ENCODE measurements at regions of chr6 and their contacts with region 1.

Region 1: GRCh38 chr6:33744001-33744848 is 2.5 kb downstream of the IP6K3 start:
- DNase-seq: peak; percentile 73
- ATAC-seq: peak; percentile 85
- H3K4me3 ChIP-seq: no peak overlapping the region
- H3K27ac ChIP-seq: no peak overlapping the region
- H3K4me1 ChIP-seq: peaks cover 6% of the 10 kb centered on the region
- H3K27me3 ChIP-seq: no peaks in the 10 kb centered on the region
- CTCF ChIP-seq: peak; percentile 96

Region 2: GRCh38 chr6:33453393-33454008 is 290.7 kb before region 1 on chr6:
- CTCF ChIA-PET with region 1: no interaction called
- POLR2A ChIA-PET with region 1: no interaction called
- intact Hi-C with region 1: no loop called
- DNase-seq: no peak
- ATAC-seq: peak; percentile 27
- H3K4me3 ChIP-seq: peak overlapping the region; percentile 86
- H3K27ac ChIP-seq: 0 out of 2 replicates have a peak overlapping the region, but pooled peaks have one; percentile 10
- H3K4me1 ChIP-seq: peaks cover 13% of the 10 kb centered on the region
- H3K27me3 ChIP-seq: no peaks in the 10 kb centered on the region
- CTCF ChIP-seq: no peak

Region 3: GRCh38 chr6:33761922-33762629 is 17.9 kb after region 1 on chr6:
- CTCF ChIA-PET with region 1: interaction called, 8 read pairs
- POLR2A ChIA-PET with region 1: no interaction called
- intact Hi-C with region 1: loop called (anchors 1 kb)
- DNase-seq: peak; percentile 59
- ATAC-seq: peak; percentile 45
- H3K4me3 ChIP-seq: no peak overlapping the region
- H3K27ac ChIP-seq: no peak overlapping the region
- H3K4me1 ChIP-seq: peaks cover 15% of the 10 kb centered on the region
- H3K27me3 ChIP-seq: no peaks in the 10 kb centered on the region
- CTCF ChIP-seq: peak; percentile 80

Region 4: GRCh38 chr6:33874136-33874760 is 130.0 kb after region 1 on chr6:
- CTCF ChIA-PET with region 1: no interaction called
- POLR2A ChIA-PET with region 1: interaction called, 15 read pairs
- intact Hi-C with region 1: no loop called
- DNase-seq: no peak
- ATAC-seq: no peak
- H3K4me3 ChIP-seq: no peak overlapping the region
- H3K27ac ChIP-seq: no peak overlapping the region
- H3K4me1 ChIP-seq: no peaks in the 10 kb centered on the region
- H3K27me3 ChIP-seq: peaks cover 74% of the 10 kb centered on the region
- CTCF ChIP-seq: no peak

Measured in PC-3 (cell line).